WTC11 (cell line): ENCODE measurements at regions of chr7 and their contacts with region 1.

Region 1: DNA sequence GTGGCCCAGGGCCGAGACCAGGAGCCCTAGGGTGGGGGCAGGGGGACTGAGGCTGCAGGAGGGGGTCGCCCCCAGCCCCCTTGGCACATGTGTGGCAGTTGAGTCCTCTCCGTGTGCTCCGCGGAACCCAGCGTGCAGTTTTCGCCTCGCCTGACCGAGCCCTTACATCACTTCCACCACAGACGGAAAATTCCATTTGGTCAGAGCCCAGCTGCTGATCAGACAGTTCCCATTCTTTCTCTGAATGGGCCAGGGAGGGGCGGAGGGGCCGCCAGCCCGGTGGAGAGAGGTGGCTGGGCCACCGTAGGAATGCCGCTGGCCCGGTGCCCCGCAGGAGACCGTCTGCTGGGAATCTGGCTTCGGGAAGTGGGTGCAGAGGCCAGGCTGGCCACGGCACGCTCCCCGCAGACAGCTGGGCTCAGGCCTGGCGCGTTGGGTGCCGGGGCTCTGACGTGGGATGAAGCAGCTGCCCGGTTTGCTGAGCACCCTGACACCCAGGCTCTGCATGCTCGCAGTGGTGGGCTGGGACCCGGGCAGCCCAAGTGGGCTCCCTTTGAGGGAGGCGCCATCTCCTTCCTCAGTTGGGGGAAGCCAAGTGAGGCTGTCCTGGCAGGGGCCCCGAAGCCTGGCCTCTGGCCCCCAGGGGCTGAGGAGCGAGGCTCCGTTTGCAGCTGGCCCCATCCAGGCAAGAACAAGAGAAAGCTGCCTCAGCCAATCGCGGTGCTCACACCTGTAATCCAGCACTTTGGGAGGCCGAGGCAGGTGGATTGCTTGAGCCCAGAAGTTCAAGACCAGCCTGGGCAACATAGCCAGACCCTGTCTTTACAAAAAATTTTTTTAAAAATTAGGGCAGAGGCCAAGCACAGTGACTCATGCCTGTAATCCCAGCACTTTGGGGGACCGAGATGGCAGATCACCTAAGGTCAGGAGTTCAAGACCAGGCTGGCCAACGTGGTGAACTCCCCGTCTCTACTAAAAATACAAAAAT is 9.9 kb downstream of the TTYH3 start:
- DNase-seq: peak; percentile 88
- ATAC-seq: peak; percentile 60
- H3K4me3 Mint-ChIP-seq: 0 out of 2 replicates have a peak overlapping the region, but pooled peaks have one; percentile 20
- H3K27ac Mint-ChIP-seq: peak overlapping the region; percentile 92
- H3K4me1 Mint-ChIP-seq: peaks cover 35% of the 10 kb centered on the region
- H3K27me3 Mint-ChIP-seq: no peaks in the 10 kb centered on the region
- CTCF ChIP-seq: no peak

Region 2: GRCh38 chr7:2537981-2538851 is 103.5 kb before region 1 on chr7:
- CTCF ChIA-PET with region 1: no interaction called
- POLR2A ChIA-PET with region 1: no interaction called
- DNase-seq: no peak
- ATAC-seq: no peak; the same call in 1 of the 2 replicates
- H3K4me3 Mint-ChIP-seq: no peak overlapping the region
- H3K27ac Mint-ChIP-seq: no peak overlapping the region
- H3K4me1 Mint-ChIP-seq: no peaks in the 10 kb centered on the region
- H3K27me3 Mint-ChIP-seq: no peaks in the 10 kb centered on the region
- CTCF ChIP-seq: no peak

Region 3: GRCh38 chr7:2567679-2568278 is 73.9 kb before region 1 on chr7:
- CTCF ChIA-PET with region 1: interaction called, 10 read pairs
- POLR2A ChIA-PET with region 1: no interaction called
- DNase-seq: peak; percentile 54
- ATAC-seq: peak; percentile 87
- H3K4me3 Mint-ChIP-seq: no peak overlapping the region
- H3K27ac Mint-ChIP-seq: no peak overlapping the region
- H3K4me1 Mint-ChIP-seq: peaks cover 9% of the 10 kb centered on the region
- H3K27me3 Mint-ChIP-seq: no peaks in the 10 kb centered on the region
- CTCF ChIP-seq: no peak

Region 4: DNA sequence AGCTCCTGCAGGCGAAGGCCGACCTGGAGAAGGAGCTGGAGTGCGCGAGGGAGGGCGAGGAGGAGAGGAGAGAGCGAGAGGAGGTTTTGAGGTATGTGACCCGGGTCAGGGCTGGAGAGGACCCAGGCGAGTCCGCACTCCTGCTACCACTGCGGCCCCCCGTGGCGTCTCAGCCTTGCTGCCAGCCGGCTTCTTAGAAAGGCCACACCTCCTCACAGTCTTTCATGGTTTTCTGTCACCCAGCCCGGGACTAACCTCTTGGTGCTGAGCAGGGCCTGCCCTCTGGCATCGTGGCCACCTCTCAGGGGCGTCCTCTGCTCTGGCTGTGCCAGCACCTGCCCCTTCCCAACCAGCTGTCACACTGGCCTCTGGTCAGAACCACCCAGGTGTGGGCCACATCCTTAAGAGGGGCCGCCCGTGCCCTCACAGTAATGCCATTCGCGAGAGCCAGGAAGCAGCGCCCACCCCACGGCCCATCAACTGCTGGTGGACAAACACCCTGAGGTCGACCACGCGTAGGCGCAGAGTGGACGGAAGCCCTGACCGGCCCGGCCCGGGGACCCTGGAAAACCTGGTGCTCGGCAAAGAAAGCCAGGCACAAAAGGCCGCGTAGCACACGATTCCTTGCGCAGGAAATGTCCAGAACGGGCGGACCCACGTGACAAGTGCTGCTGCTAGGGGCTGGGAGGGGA is 48.5 kb before region 1 on chr7:
- CTCF ChIA-PET with region 1: no interaction called
- POLR2A ChIA-PET with region 1: no interaction called
- DNase-seq: no peak
- ATAC-seq: no peak
- H3K4me3 Mint-ChIP-seq: no peak overlapping the region
- H3K27ac Mint-ChIP-seq: peak overlapping the region; percentile 80
- H3K4me1 Mint-ChIP-seq: no peaks in the 10 kb centered on the region
- H3K27me3 Mint-ChIP-seq: no peaks in the 10 kb centered on the region
- CTCF ChIP-seq: no peak

Region 5: GRCh38 chr7:2613931-2614600 is 27.6 kb before region 1 on chr7:
- CTCF ChIA-PET with region 1: interaction called, 15 read pairs
- POLR2A ChIA-PET with region 1: interaction called, 3 read pairs
- DNase-seq: no peak
- ATAC-seq: no peak
- H3K4me3 Mint-ChIP-seq: no peak overlapping the region
- H3K27ac Mint-ChIP-seq: no peak overlapping the region
- H3K4me1 Mint-ChIP-seq: peaks cover 30% of the 10 kb centered on the region
- H3K27me3 Mint-ChIP-seq: no peaks in the 10 kb centered on the region; the same call in 1 of the 2 replicates
- CTCF ChIP-seq: no peak

Region 6: GRCh38 chr7:2621061-2621828 is 20.5 kb before region 1 on chr7:
- CTCF ChIA-PET with region 1: interaction called, 5 read pairs
- POLR2A ChIA-PET with region 1: interaction called, 11 read pairs
- DNase-seq: peak; percentile 62
- ATAC-seq: peak; percentile 34
- H3K4me3 Mint-ChIP-seq: no peak overlapping the region
- H3K27ac Mint-ChIP-seq: peak overlapping the region; percentile 89; the same call in 1 of the 2 replicates
- H3K4me1 Mint-ChIP-seq: peaks cover 35% of the 10 kb centered on the region
- H3K27me3 Mint-ChIP-seq: no peaks in the 10 kb centered on the region; the same call in 1 of the 2 replicates
- CTCF ChIP-seq: no peak

Region 7: GRCh38 chr7:2660585-2661408 is 19.1 kb after region 1 on chr7:
- CTCF ChIA-PET with region 1: interaction called, 32 read pairs
- POLR2A ChIA-PET with region 1: interaction called, 3 read pairs
- DNase-seq: no peak
- ATAC-seq: no peak
- H3K4me3 Mint-ChIP-seq: no peak overlapping the region
- H3K27ac Mint-ChIP-seq: peak overlapping the region; percentile 83
- H3K4me1 Mint-ChIP-seq: peaks cover 6% of the 10 kb centered on the region; the same call in 1 of the 2 replicates
- H3K27me3 Mint-ChIP-seq: no peaks in the 10 kb centered on the region
- CTCF ChIP-seq: peak; percentile 58

Region 8: DNA sequence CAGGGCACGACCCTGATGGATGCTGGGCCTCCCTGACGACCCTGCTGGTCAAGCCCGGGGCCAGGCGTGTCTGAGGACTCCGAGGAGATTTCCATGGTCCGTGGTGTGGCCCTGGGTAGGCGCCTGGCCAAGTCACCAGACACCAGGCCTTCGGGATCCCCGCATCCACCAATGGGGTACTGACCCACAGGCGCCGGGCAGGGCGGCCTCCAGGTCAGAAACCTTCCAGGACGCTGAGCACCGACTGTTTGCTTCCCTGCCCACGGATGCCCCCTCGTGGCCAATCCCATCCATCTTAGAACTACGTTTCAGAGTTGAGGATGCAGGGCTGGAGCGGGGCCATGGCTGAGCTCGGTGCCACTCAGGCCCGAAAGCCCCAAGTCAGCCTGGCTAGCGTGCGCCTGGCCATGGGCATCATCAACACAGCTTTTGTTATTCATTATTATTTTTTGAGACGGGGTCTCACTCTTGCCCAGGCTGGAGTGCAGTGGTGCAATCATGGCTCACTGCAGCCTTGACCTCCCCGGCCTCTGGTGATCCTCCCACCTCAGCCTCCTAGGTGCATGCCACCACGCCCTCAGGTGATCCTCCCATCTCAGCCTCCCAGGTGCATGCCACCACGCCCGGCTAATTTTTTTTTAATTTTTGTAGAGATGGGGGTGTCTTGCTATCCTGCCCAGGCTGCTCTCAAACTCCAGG is 39.2 kb after region 1 on chr7:
- CTCF ChIA-PET with region 1: interaction called, 20 read pairs
- POLR2A ChIA-PET with region 1: no interaction called
- DNase-seq: peak; percentile 89
- ATAC-seq: peak; percentile 90
- H3K4me3 Mint-ChIP-seq: no peak overlapping the region
- H3K27ac Mint-ChIP-seq: no peak overlapping the region
- H3K4me1 Mint-ChIP-seq: no peaks in the 10 kb centered on the region
- H3K27me3 Mint-ChIP-seq: peaks cover 2% of the 10 kb centered on the region
- CTCF ChIP-seq: peak; percentile 69

Region 9: DNA sequence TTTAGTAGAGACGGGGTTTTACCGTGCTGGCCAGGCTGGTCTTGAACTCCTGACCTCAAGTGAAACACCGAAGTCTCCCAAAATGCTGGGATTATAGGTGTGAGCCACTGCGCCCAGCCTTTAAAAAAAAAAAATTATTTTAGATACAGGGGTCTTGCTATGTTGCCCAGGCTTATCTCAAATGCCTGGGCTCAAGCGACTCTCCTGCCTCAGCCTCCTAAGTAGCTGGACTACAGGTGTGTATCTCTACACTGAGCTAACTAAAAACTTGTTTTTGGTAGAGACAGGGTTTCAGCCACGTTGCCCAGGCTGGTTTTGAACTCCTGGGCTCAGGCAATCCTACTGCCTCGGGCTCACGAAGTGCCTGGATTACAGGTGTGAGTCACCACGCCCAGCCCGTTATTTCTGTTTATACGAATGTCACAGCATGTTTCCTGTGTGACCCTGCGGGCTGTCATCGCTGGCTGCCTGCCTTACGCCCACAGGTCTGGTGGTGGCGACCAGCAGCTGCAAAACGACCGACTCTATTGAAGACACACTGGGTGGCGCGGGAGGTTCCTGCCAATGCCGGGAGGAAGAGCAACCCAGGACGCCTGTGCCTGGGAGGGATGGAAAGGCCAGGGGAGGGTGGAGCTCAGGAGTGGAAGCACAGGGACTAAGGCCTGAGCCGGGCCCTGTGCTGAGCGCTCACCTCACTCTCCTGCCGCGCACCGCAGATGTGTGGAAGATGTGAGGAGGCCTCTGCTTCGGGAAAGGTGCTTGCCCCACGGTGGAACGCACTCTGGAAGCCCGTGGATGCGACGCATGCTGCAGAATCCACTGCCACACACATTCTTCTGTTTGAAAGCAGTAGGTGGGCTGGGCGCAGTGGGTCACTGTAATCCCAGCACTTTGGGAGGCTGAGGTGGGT is 79.1 kb after region 1 on chr7:
- CTCF ChIA-PET with region 1: no interaction called
- POLR2A ChIA-PET with region 1: no interaction called
- DNase-seq: no peak
- ATAC-seq: peak; percentile 10; the same call in 1 of the 2 replicates
- H3K4me3 Mint-ChIP-seq: no peak overlapping the region
- H3K27ac Mint-ChIP-seq: peak overlapping the region; percentile 63
- H3K4me1 Mint-ChIP-seq: peaks cover 3% of the 10 kb centered on the region; the same call in 1 of the 2 replicates
- H3K27me3 Mint-ChIP-seq: no peaks in the 10 kb centered on the region
- CTCF ChIP-seq: no peak